Activated naive CD8-positive, alpha-beta T cell treated with anti-CD3 and anti-CD28 coated beads, Interleukin-2, amount 10 ng/mL, durations not matched to agents 7 days and 5 days (primary cell): ENCODE measurements at regions of chr1 and their contacts with region 1.

Region 1: DNA sequence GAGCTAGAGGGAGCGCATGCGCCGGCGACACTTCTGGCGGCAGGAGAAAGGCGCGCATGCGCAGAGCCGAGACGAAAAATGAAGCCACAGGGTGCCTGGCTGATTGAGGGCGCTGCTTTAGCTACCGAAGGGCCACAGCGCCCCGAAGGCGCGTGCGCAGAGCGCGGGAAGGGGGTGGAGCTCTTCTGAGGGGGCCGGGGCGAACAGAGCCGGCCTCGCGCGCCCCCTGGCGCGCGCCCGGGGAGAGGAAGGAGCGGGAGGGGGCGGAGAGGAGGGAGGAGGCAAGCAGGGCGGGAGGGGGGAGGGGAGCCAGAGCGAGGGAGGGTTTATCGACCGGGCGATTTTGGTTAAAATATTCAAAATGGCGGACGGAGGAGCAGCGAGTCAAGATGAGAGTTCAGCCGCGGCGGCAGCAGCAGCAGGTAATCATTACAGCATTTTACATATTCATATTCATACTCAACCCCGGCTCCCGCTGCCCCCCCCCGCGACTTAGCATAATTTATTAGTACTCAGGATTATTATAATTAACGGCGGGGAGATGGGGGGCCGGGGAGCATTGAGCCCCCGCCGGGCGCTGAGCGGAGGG is at the start of gene POU2F1:
- DNase-seq: peak; percentile 99
- ATAC-seq: peak; percentile 82
- H3K4me3 Mint-ChIP-seq: peak within 1 kb of the TSS; percentile 94
- H3K27ac Mint-ChIP-seq: peak within 1 kb of the TSS; percentile 100
- H3K4me1 Mint-ChIP-seq: peaks cover 32% of the 10 kb centered on the region
- H3K27me3 Mint-ChIP-seq: no peaks in the 10 kb centered on the region
- total RNA-seq, gene POU2F1: 25.6 to 28.0 TPM

Region 2: DNA sequence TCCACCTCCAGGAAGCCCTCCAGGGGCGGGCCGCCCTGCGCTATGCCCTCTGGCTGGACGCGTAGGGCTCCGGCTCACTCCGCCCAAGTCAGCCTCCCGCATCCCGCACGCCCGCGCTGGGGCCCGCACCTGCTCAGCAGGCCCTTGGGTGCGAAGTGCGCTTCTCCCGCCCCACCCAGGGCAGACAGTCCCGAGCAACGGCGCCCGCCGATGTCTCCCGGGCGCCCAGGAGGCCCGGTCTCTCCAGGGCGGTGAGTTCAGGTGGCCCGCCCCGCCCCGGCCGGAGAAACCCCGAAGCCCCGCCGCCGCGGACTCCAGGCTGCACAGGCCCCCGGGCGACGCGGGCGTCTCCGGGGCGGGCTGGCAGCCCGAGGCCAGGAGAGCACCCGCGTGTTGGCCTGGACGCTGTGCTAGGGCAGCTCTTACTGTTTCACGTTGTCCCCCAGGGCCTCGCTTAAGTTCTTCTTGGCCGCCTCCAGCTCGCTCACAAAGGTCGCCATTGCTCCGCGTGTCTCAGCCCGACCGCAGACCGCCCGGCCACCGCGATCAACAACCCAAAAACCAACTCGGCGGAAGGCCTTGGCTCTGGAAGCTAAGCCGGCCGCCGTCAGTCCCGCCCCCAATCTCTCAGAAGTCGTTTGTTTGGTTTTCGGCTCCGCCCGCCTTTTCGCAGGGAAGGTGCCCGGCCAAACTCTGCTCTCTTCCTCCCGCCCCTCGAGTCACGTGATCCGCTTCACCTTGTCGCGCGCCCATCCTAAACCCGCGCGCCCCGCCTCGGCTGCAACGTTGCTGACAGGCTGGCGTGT is 344.7 kb before region 1 on chr1 and contains the start of gene TADA1:
- POLR2A ChIA-PET with region 1: interaction called, 12 read pairs
- DNase-seq: peak; percentile 98
- ATAC-seq: peak; percentile 88
- H3K4me3 Mint-ChIP-seq: peak within 1 kb of the TSS; percentile 99
- H3K27ac Mint-ChIP-seq: peak within 1 kb of the TSS; percentile 99
- H3K4me1 Mint-ChIP-seq: peaks cover 31% of the 10 kb centered on the region
- H3K27me3 Mint-ChIP-seq: peaks cover 4% of the 10 kb centered on the region
- total RNA-seq, gene TADA1: 14.4 to 15.3 TPM

Region 3: GRCh38 chr1:167263819-167264464 is 43.3 kb after region 1 on chr1:
- POLR2A ChIA-PET with region 1: interaction called, 11 read pairs
- DNase-seq: no peak
- ATAC-seq: peak; percentile 69
- H3K4me3 Mint-ChIP-seq: no peak overlapping the region
- H3K27ac Mint-ChIP-seq: no peak overlapping the region
- H3K4me1 Mint-ChIP-seq: peaks cover 18% of the 10 kb centered on the region
- H3K27me3 Mint-ChIP-seq: no peaks in the 10 kb centered on the region

Region 4: GRCh38 chr1:167276969-167277368 is 56.3 kb after region 1 on chr1:
- POLR2A ChIA-PET with region 1: no interaction called
- DNase-seq: no peak
- ATAC-seq: no peak
- H3K4me3 Mint-ChIP-seq: no peak overlapping the region
- H3K27ac Mint-ChIP-seq: peak overlapping the region; percentile 3
- H3K4me1 Mint-ChIP-seq: peaks cover 18% of the 10 kb centered on the region
- H3K27me3 Mint-ChIP-seq: no peaks in the 10 kb centered on the region

Region 5: GRCh38 chr1:167447521-167448136 is 227.0 kb after region 1 on chr1:
- POLR2A ChIA-PET with region 1: interaction called, 11 read pairs
- DNase-seq: peak; percentile 62
- ATAC-seq: peak; percentile 87
- H3K4me3 Mint-ChIP-seq: peak overlapping the region; percentile 79
- H3K27ac Mint-ChIP-seq: peak overlapping the region; percentile 95
- H3K4me1 Mint-ChIP-seq: peaks cover 65% of the 10 kb centered on the region
- H3K27me3 Mint-ChIP-seq: no peaks in the 10 kb centered on the region

Region 6: DNA sequence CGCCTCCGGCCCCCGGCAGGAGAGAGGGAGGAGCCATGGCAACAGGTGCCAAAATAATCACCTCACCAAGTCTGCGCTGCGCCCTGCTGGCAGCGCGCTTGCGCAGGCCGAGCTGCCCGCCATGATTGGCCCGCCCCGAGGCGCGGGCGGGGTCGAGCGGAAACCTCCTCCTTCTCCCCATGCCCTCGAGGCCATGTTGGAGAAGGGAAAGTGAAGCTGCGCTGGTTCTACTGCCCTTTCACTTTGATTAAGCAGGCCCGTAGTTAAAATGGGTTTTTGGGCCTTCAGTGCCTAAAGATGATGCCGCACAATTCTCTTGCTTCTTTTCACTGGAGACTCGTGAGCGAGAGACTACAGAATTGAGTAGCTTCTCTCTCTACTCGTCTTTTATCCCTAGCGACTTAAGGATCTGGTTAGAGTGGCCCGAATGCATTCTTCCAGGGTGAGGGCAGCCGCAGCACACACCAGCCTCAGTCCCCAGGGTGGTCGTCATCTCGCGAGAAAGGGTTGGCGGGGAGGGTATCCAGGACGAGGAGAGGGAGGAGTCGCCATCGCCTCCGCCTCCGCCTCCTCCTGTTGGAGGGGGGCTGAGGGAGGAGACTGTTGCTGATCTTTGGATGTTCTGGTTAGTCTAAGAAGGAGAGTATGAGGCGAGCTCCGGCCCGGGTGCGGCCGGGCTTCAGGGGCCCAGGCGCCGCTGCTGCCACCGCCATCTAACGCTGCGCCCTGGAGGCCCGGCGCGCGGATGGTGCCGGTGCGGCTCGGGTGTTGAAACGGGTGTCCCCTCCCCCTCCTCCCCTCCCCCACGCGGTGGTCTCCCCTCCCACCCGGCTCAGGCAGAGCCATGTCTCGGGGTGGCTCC is 715.7 kb after region 1 on chr1 and contains the start of gene DCAF6:
- POLR2A ChIA-PET with region 1: interaction called, 15 read pairs
- DNase-seq: peak; percentile 96
- ATAC-seq: peak; percentile 85
- H3K4me3 Mint-ChIP-seq: peak within 1 kb of the TSS; percentile 91
- H3K27ac Mint-ChIP-seq: peak within 1 kb of the TSS; percentile 96
- H3K4me1 Mint-ChIP-seq: peaks cover 28% of the 10 kb centered on the region
- H3K27me3 Mint-ChIP-seq: no peaks in the 10 kb centered on the region
- total RNA-seq, gene DCAF6: 28.2 to 28.5 TPM